B cell (primary cell): ENCODE measurements at regions of chr3 and their contacts with region 1.

Region 1: GRCh38 chr3:71031914-71032521 is 551.5 kb downstream of the FOXP1 start:
- DNase-seq: peak; percentile 92
- ATAC-seq: peak; percentile 94
- H3K4me3 ChIP-seq: peak overlapping the region in 2 of 5 experiments; percentile 10 to 31
- H3K4me3 Mint-ChIP-seq: peak overlapping the region; percentile 69
- H3K27ac ChIP-seq: peak overlapping the region; percentile 89 to 91
- H3K27ac Mint-ChIP-seq: peak overlapping the region; percentile 96
- H3K4me1 ChIP-seq: peaks cover 69 to 74% of the 10 kb centered on the region in 2 donors
- H3K4me1 Mint-ChIP-seq: peaks cover 90% of the 10 kb centered on the region
- H3K27me3 ChIP-seq: no peaks in the 10 kb centered on the region
- H3K27me3 Mint-ChIP-seq: no peaks in the 10 kb centered on the region
- CTCF ChIP-seq: no peak

Region 2: GRCh38 chr3:70308760-70309159 is 723.3 kb before region 1 on chr3:
- CTCF ChIA-PET with region 1: no interaction called
- POLR2A ChIA-PET with region 1: no interaction called
- intact Hi-C with region 1: no loop called
- DNase-seq: no peak
- ATAC-seq: no peak
- H3K4me3 ChIP-seq: no peak overlapping the region
- H3K4me3 Mint-ChIP-seq: no peak overlapping the region
- H3K27ac ChIP-seq: no peak overlapping the region
- H3K27ac Mint-ChIP-seq: no peak overlapping the region
- H3K4me1 ChIP-seq: no peaks in the 10 kb centered on the region
- H3K4me1 Mint-ChIP-seq: no peaks in the 10 kb centered on the region
- H3K27me3 ChIP-seq: peaks cover 0 to 3% (median 0%) of the 10 kb centered on the region in 4 experiments
- H3K27me3 Mint-ChIP-seq: no peaks in the 10 kb centered on the region
- CTCF ChIP-seq: no peak

Region 3: GRCh38 chr3:71045917-71046282 is 13.9 kb after region 1 on chr3:
- CTCF ChIA-PET with region 1: interaction called, 5 read pairs
- POLR2A ChIA-PET with region 1: no interaction called
- intact Hi-C with region 1: loop called (anchors 1 kb)
- DNase-seq: no peak
- ATAC-seq: peak; percentile 54
- H3K4me3 ChIP-seq: peak overlapping the region in 2 of 5 experiments; percentile 15 to 25
- H3K4me3 Mint-ChIP-seq: peak overlapping the region; percentile 66
- H3K27ac ChIP-seq: peak overlapping the region; percentile 84 to 89
- H3K27ac Mint-ChIP-seq: peak overlapping the region; percentile 84
- H3K4me1 ChIP-seq: peaks cover 64 to 69% of the 10 kb centered on the region in 2 donors
- H3K4me1 Mint-ChIP-seq: peaks cover 82% of the 10 kb centered on the region
- H3K27me3 ChIP-seq: no peaks in the 10 kb centered on the region
- H3K27me3 Mint-ChIP-seq: no peaks in the 10 kb centered on the region
- CTCF ChIP-seq: no peak